OCI-LY7 (cell line): ENCODE measurements at regions of chr14 and their contacts with region 1.

Region 1: DNA sequence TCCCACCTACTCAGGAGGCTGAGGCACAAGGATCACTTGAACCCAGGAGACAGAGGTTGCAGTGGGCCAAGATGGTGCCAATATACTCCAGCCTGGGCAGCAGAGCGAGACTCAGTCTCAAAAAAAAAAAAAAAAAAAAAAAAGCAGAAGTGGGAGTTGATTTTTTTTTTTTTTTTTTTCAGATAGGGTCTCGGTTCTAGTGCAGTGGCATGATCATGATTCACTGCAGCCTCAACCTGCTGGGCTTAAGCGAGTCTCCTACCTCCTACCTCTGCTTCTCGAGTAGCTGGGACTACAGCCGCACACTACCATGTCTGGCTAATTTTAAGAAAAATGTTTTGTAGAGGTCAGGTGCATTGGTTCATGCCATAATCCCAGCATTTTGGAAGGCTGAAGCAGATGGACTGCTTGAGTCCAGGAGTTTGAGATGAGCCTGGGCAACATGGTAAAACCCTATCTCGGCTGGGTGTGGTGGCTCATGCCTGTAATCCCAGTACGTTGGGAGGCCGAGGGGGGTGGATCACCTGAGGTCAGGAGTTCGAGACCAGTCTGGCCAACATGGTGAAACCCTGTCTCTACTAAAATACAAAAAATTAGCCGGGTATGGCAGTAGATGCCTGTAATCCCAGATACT is 16.3 kb upstream of the HSP90AA1 start:
- DNase-seq: peak; percentile 76
- H3K4me3 ChIP-seq: no peak overlapping the region
- H3K27ac ChIP-seq: peak overlapping the region; percentile 25
- H3K4me1 ChIP-seq: peaks cover 31% of the 10 kb centered on the region
- CTCF ChIP-seq: no peak

Region 2: GRCh38 chr14:101927859-101928258 is 175.3 kb before region 1 on chr14:
- CTCF ChIA-PET with region 1: no interaction called
- POLR2A ChIA-PET with region 1: no interaction called
- intact Hi-C with region 1: no loop called
- DNase-seq: no peak
- H3K4me3 ChIP-seq: no peak overlapping the region
- H3K27ac ChIP-seq: no peak overlapping the region
- H3K4me1 ChIP-seq: no peaks in the 10 kb centered on the region
- CTCF ChIP-seq: no peak

Region 3: DNA sequence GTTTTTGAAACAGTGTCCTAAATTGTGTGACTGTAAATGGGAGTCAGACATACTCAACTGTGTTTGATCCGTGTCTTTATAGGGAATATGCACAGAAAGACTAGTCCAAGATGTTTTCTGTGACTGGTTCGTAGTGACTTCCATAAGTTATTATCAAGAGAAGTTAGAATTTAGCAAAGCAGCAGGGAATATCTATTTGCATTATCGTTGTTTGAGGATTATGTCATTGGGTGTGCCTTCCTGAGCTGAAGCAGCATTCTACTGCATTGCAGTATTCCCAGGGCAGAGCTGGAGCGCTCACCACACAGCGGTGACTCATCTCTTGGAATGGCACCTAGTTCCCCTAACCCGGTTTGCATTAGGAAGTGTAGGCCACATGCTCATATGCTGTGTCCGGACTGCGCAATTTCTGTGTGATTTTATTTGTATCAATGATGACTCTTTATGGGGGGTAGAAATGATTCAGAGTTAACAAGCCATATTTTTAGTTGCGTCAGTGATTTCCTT is 130.9 kb before region 1 on chr14:
- CTCF ChIA-PET with region 1: no interaction called
- POLR2A ChIA-PET with region 1: interaction called, 10 read pairs
- intact Hi-C with region 1: no loop called
- DNase-seq: no peak
- H3K4me3 ChIP-seq: no peak overlapping the region
- H3K27ac ChIP-seq: no peak overlapping the region
- H3K4me1 ChIP-seq: peaks cover 18% of the 10 kb centered on the region
- CTCF ChIP-seq: no peak

Region 4: DNA sequence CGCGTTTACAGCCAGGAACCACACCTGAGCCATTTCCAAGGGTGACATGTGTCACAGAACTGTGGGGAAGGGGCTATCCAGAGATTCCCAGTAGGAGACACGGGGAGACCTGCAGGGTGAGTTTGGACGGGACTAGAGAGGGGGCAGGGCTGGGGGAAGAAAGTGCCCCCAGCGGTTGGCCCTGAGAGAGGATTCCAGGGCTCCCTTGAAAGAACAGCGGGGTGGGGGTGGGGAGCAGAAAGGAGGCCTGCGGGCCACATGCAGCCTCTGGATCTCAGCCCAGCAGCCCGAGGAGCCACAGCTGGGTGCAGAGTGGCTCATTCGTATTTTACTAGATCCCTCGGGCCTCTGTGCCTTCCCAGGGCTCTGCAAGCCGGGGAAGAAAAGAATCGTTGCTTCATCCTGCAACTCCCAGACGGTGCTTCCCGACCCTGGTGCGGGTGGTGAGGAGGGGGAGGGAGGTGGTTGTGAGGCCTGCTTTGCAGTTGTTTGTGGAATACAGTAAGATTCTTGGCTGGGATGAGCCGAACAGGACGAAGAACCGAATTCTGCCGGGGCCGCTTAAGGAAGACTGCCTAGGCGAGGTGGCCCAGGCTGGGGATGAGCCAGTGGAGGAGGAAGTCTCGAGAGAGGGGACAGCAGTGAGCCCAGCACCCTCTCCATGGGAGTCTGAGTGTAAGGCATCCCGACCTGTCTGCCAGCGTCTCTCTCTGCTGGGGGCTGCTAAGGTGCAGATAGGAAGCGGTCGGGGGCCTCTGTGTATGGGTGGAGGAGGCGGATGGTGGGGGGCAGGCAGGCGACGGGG is 442.5 kb after region 1 on chr14:
- CTCF ChIA-PET with region 1: no interaction called
- POLR2A ChIA-PET with region 1: no interaction called
- intact Hi-C with region 1: no loop called
- DNase-seq: no peak
- H3K4me3 ChIP-seq: no peak overlapping the region
- H3K27ac ChIP-seq: no peak overlapping the region
- H3K4me1 ChIP-seq: no peaks in the 10 kb centered on the region
- CTCF ChIP-seq: no peak